Aorta (tissue), 5 donors: ENCODE measurements at regions of chr2 and their contacts with region 1.

Region 1: GRCh38 chr2:133733901-133734255 is 165.6 kb upstream of the NCKAP5 start:
- DNase-seq: no peak
- ATAC-seq: no peak
- H3K4me3 ChIP-seq: no peak overlapping the region
- H3K27ac ChIP-seq: no peak overlapping the region
- H3K4me1 ChIP-seq: no peaks in the 10 kb centered on the region
- H3K27me3 ChIP-seq: no peaks in the 10 kb centered on the region

Region 2: DNA sequence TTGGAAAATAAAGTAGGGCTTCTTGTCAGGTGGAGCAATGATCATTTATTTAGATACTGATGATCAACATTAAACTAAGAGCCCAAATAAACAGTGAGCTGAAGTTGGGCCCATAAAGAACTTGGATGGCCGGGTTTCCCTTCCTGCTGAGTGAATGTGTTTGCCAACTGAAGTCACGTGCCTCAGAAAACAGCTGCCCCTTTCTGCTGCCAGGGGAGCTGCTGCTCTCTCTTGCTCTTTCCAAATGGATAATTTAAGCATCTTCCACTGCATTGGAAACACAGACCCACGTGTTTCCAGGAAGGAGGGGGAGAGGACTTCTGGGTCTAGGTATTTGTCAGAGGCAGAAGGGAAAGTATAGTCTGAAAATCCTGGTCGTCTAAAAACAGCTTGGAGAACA is 142.7 kb before region 1 on chr2:
- intact Hi-C with region 1: loop called in 1 of 2 experiments (anchors 10 kb)
- DNase-seq: peak in 1 of 2 donors; percentile 55
- ATAC-seq: peak; percentile 63
- H3K4me3 ChIP-seq: no peak overlapping the region
- H3K27ac ChIP-seq: no peak overlapping the region
- H3K4me1 ChIP-seq: peaks cover 0 to 4% of the 10 kb centered on the region in 2 donors
- H3K27me3 ChIP-seq: no peaks in the 10 kb centered on the region

Region 3: GRCh38 chr2:133812826-133813617 is 79.1 kb after region 1 on chr2:
- intact Hi-C with region 1: no loop called
- DNase-seq: no peak
- ATAC-seq: no peak
- H3K4me3 ChIP-seq: no peak overlapping the region
- H3K27ac ChIP-seq: no peak overlapping the region
- H3K4me1 ChIP-seq: no peaks in the 10 kb centered on the region
- H3K27me3 ChIP-seq: no peaks in the 10 kb centered on the region